ENCODE measurements at regions of chr22 and their contacts with region 1.

Region 1: DNA sequence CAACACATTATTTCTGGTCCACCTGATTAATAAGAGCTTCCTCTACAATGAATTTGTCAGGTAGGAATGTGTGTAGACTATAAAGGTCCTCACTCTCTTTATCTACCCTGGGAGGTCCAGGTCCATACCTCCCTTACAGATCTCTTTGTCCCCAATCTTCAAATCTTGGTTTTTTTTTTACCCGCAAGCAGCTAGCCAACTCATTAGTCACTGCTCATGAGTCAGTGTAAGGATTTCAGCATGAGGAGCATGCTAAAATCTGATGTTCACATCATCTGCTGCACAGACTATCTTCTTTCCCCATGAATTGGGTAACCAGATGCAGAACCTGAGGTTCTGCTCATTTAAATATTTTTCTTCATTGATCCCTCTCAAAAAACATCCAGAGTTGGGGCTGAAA is 397.0 kb upstream of the ISX start:
- DNase-seq: no peak
- H3K4me3 ChIP-seq: no peak overlapping the region
- H3K27ac ChIP-seq: no peak overlapping the region
- H3K4me1 ChIP-seq: no peaks in the 10 kb centered on the region
- H3K27me3 ChIP-seq: no peaks in the 10 kb centered on the region
- CTCF ChIP-seq: no peak
- EP300 ChIP-seq: no peak
- POLR2A ChIP-seq: no peak

Region 2: DNA sequence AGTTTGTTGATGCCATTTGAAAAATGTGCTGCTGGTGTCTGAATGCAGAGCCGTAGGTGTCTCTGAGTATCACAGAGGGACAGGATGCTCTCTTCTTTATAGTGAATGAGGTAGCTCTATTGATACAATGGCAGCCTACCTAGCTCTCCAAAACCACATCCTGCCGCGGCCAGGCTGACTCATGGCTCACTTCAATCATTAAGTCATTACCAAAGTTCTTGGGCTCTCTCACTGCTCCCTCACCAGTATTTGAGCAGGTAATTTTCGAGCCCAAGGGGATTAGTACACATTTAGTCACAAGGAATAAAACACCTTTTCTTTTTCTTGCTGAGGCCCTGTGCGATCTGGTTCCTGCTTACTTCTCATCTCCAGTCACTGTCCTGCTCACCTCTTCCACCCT is 239.7 kb before region 1 on chr22:
- intact Hi-C with region 1: no loop called
- DNase-seq: no peak
- H3K4me3 ChIP-seq: no peak overlapping the region
- H3K27ac ChIP-seq: no peak overlapping the region
- H3K4me1 ChIP-seq: no peaks in the 10 kb centered on the region
- H3K27me3 ChIP-seq: no peaks in the 10 kb centered on the region
- CTCF ChIP-seq: no peak
- EP300 ChIP-seq: no peak
- POLR2A ChIP-seq: no peak

Region 3: GRCh38 chr22:34534101-34534500 is 134.9 kb before region 1 on chr22:
- intact Hi-C with region 1: no loop called
- DNase-seq: no peak
- H3K4me3 ChIP-seq: no peak overlapping the region
- H3K27ac ChIP-seq: no peak overlapping the region
- H3K4me1 ChIP-seq: no peaks in the 10 kb centered on the region
- H3K27me3 ChIP-seq: no peaks in the 10 kb centered on the region
- CTCF ChIP-seq: no peak
- EP300 ChIP-seq: no peak
- POLR2A ChIP-seq: no peak

Region 4: DNA sequence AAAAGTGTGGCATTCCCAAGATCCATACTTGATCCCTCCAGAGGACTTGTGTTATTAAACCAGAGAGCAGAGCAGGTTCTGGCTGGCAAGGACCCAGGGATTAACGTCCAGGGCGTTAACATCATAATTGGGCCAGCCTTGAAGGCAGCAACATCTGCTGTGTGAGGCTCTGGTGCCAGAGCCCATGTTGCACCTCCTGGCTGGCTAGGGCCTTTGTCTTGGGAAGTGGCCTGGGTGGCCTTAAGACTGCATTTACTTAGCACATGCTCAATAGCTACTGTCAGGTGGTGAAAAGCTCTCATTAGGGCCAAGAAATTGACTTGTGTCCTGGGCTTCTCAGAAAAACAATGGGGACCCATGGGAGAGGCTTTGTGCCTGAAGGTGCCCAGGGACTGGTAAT is 1967.9 kb after region 1 on chr22:
- intact Hi-C with region 1: loop called in 1 of 4 experiments (anchors 5 kb)
- DNase-seq: no peak
- H3K4me3 ChIP-seq: no peak overlapping the region
- H3K27ac ChIP-seq: no peak overlapping the region
- H3K4me1 ChIP-seq: no peaks in the 10 kb centered on the region
- H3K27me3 ChIP-seq: no peaks in the 10 kb centered on the region
- CTCF ChIP-seq: no peak
- EP300 ChIP-seq: no peak
- POLR2A ChIP-seq: no peak

Measured in ovary (tissue), 10 donors.